Common myeloid progenitor, CD34-positive (primary cell): ENCODE measurements at regions of chr4 and their contacts with region 1.

Region 1: DNA sequence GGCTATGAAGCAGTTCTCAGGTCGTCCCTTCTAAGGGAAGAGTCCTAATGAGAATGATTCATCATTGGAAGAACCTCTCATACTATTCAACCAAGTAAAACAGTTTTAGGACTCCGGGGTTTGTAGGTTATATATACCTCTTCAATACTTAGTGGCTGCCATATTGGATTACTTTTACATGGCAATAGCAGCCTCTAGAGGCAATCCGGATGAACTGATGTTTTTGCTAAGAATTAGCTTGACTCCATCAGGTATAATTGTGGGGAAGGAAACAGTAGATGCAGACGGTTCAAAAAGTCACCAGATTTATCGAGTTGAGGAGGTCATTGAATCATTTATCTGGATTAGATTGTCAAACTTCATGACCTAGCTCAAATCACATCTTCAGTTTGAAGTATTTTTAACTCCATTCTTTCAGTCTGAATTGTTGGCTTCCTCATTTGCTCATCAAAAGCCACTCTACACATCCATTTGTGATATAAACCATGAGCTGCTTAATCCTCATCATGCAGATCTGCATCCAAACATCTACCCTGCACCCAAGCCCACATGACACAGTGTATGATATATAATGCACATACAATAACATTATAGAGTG is 28.4 kb downstream of the GUCY1B1 start:
- DNase-seq: peak; percentile 74 to 85 (median 84)
- H3K4me3 ChIP-seq: no peak overlapping the region
- H3K27ac ChIP-seq: no peak overlapping the region
- H3K4me1 ChIP-seq: peaks cover 0 to 13% (median 3%) of the 10 kb centered on the region in 4 experiments
- H3K27me3 ChIP-seq: no peaks in the 10 kb centered on the region

Region 2: DNA sequence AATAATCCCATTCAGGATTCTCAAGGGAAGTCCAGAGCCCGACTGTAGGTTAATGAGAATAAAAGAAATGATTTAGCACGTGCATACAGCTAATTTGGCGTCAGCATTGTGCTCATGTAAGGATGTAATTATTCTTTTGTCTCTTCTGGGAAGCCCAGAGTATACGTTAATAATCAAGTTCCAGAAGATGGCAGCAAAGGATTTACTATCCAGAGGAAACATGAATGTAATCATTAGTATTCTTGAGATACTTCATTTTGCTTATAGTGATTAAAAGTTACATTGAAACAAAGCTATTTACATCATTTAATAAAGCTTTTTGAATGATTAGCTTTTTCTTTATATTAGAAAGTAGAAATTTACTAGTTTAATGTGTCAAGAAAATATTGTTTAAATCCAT is 383.3 kb before region 1 on chr4:
- CTCF ChIA-PET with region 1: interaction called, 10 read pairs
- POLR2A ChIA-PET with region 1: no interaction called
- DNase-seq: peak; percentile 57 to 79 (median 77)
- H3K4me3 ChIP-seq: no peak overlapping the region
- H3K27ac ChIP-seq: no peak overlapping the region
- H3K4me1 ChIP-seq: no peaks in the 10 kb centered on the region
- H3K27me3 ChIP-seq: no peaks in the 10 kb centered on the region

Region 3: DNA sequence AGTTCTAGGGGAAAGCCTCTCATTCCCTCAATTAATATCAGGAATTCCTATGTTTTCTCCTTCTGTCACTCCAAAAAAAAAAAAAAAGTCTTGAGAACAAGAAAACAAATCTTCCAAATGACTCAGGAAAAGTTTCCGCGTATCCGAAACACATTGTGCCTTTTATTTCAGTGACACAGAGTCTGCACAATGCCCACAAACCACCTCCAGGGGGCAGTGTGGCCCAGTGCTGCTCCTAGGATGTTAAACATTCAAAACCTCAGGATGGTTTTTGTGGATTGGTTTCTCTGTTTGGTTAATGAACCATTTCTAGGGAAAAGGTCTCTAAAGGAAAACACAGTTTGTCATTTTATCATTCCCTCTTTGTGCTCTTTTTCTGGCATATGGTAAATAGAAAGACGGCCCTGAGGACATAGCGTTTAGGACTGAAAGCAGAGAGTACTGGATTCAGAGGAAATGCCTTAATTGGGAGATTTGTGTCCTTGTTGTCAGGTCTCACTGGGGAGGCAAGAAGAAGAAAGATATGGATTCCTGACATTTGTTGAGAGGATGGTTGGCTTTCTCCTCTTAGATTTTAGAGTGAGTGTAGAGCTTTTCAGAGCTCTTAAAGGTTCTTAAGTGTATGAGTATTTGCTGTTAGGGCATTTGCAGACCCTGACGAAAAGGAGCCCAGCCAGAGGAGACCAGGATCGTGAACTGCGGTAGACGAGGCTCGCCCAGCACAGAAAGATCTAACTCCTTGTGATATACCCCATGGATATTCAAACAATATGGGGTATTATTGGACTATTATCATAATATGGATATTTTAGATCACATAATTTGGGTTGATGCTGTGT is 344.7 kb before region 1 on chr4:
- CTCF ChIA-PET with region 1: interaction called, 16 read pairs
- POLR2A ChIA-PET with region 1: no interaction called
- DNase-seq: peak; percentile 66 to 79 (median 72)
- H3K4me3 ChIP-seq: peak overlapping the region in 5 of 7 experiments; percentile 21 to 70 (median 37)
- H3K27ac ChIP-seq: no peak overlapping the region
- H3K4me1 ChIP-seq: peaks cover 0 to 8% (median 1%) of the 10 kb centered on the region in 4 experiments
- H3K27me3 ChIP-seq: no peaks in the 10 kb centered on the region

Region 4: GRCh38 chr4:155505321-155505720 is 281.9 kb before region 1 on chr4:
- CTCF ChIA-PET with region 1: no interaction called
- POLR2A ChIA-PET with region 1: no interaction called
- DNase-seq: no peak
- H3K4me3 ChIP-seq: no peak overlapping the region
- H3K27ac ChIP-seq: no peak overlapping the region
- H3K4me1 ChIP-seq: no peaks in the 10 kb centered on the region
- H3K27me3 ChIP-seq: no peaks in the 10 kb centered on the region

Region 5: DNA sequence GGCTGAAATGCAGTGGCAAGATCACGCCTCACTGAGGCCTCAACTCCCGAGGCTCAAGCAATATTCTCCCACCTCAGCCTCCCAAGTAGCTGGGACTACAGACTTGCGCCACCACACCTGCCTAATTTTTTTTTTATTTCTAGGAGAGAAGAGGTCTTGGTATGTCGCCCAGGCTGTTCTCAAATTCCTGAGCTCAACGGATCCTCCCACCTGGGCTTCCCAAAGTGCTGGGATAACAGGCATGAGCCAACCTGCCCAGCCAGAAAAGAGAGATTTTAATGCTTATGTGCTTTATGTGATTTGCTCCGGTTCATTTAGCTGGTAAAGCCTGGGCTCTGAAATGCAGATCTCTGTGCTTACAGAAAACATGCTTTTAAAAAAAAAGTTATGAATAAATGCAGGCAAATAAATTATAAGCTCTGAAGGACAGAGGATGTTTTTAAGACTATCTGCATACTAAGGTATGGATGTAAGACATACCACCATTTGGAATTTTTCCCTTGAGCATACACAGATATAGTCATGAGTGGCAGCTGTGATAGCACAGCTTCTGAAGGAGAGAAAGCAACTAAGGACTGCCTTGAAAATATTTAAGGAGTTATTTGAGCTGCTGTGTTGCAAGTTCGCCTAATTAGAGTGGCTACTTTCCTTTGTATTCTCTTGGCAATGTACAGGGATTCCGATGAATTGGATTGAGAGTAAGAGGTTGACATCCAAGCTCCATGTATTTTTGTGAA is 14.6 kb before region 1 on chr4:
- CTCF ChIA-PET with region 1: interaction called, 11 read pairs
- POLR2A ChIA-PET with region 1: no interaction called
- DNase-seq: no peak
- H3K4me3 ChIP-seq: no peak overlapping the region
- H3K27ac ChIP-seq: no peak overlapping the region
- H3K4me1 ChIP-seq: peaks cover 0 to 11% (median 5%) of the 10 kb centered on the region in 4 experiments
- H3K27me3 ChIP-seq: no peaks in the 10 kb centered on the region